ENCODE measurements at regions of chrX and their contacts with region 1.

Region 1: GRCh38 chrX:40062525-40063155 is 35.1 kb downstream of the BCOR start:
- DNase-seq: no peak
- ATAC-seq: no peak
- H3K4me3 ChIP-seq: no peak overlapping the region
- H3K4me3 Mint-ChIP-seq: no peak overlapping the region
- H3K27ac ChIP-seq: no peak overlapping the region
- H3K27ac Mint-ChIP-seq: no peak overlapping the region
- H3K4me1 ChIP-seq: peaks cover 5% of the 10 kb centered on the region
- H3K4me1 Mint-ChIP-seq: peaks cover 15 to 25% of the 10 kb centered on the region in 2 donors
- H3K27me3 ChIP-seq: no peaks in the 10 kb centered on the region
- H3K27me3 Mint-ChIP-seq: no peaks in the 10 kb centered on the region
- CTCF ChIP-seq: no peak

Region 2: DNA sequence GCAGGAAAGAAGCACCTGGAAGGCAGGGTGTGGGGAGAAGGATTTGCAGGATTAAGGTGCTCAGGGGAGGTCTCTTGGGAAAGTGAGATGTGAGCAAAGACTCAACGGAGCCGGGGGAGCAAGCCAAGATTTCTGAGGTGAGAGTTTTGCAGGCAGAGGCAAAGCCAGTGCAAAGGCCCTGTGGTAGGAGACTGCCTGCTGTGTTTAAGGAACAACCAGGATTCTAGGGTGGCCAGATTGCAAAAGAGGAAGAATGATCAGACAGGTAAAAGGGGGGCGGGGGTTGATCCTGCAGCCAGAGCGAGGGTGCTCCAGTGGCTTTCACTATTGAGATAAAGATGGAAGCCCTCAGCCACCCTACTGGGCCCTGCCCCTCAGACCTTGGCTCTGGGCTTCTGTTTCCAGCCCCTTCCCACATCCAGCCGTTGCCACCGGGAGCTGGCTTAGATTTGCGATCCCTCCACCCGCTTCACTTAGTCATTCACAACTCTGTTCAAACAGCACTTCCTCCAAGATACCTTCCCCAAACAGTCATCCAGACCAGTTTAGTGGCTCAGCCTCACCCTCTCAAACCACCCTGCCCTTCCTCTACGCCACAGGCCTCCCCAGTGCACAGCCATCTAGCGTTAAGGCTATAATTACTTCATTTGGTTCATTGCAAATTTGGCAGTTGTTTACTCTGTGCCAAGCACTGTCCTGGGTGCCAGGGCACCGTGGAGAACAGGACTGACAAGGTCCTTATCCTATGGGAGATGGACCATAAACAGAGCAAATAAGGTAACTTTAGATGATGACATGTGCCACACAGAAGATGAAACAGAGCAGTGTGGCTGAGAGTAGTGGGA is 58.4 kb after region 1 on chrX:
- intact Hi-C with region 1: no loop called
- DNase-seq: no peak
- ATAC-seq: peak in 1 of 3 donors; percentile 25
- H3K4me3 ChIP-seq: no peak overlapping the region
- H3K4me3 Mint-ChIP-seq: no peak overlapping the region
- H3K27ac ChIP-seq: no peak overlapping the region
- H3K27ac Mint-ChIP-seq: no peak overlapping the region
- H3K4me1 ChIP-seq: peaks cover 7% of the 10 kb centered on the region
- H3K4me1 Mint-ChIP-seq: peaks cover 5 to 14% of the 10 kb centered on the region in 2 donors
- H3K27me3 ChIP-seq: no peaks in the 10 kb centered on the region
- H3K27me3 Mint-ChIP-seq: peaks cover 6 to 10% of the 10 kb centered on the region in 2 donors
- CTCF ChIP-seq: no peak

Region 3: GRCh38 chrX:40132751-40133150 is 70.1 kb after region 1 on chrX:
- intact Hi-C with region 1: loop called (anchors 5 kb)
- DNase-seq: no peak
- ATAC-seq: no peak
- H3K4me3 ChIP-seq: no peak overlapping the region
- H3K4me3 Mint-ChIP-seq: no peak overlapping the region
- H3K27ac ChIP-seq: no peak overlapping the region
- H3K27ac Mint-ChIP-seq: no peak overlapping the region
- H3K4me1 ChIP-seq: no peaks in the 10 kb centered on the region
- H3K4me1 Mint-ChIP-seq: peaks cover 0 to 5% of the 10 kb centered on the region in 2 donors
- H3K27me3 ChIP-seq: no peaks in the 10 kb centered on the region
- H3K27me3 Mint-ChIP-seq: no peaks in the 10 kb centered on the region
- CTCF ChIP-seq: no peak